ENCODE measurements at regions of chr9 and their contacts with region 1.

Region 1: DNA sequence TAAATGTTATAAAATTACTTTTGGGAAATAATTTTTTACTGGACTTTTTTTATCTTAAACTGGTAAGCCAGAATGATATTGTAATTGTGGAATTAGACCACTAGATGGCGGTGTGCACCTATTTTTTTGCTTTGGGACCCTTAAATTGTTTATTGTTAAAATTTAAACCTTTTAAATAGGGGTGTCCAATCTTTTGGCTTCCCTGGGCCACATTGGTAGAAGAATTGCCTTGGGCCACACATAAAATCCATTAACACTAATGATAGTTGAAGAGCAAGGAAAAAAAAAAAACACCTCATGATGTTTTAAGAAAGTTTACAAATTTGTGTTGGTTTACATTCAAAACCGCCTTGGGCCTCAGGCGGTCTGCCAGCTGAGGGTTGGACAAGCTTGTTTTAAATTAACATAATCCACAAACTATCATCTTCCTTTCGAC is 28.4 kb upstream of the GADD45G start:
- DNase-seq: no peak
- H3K4me3 ChIP-seq: no peak overlapping the region
- H3K27ac ChIP-seq: no peak overlapping the region
- H3K4me1 ChIP-seq: no peaks in the 10 kb centered on the region
- H3K27me3 ChIP-seq: no peaks in the 10 kb centered on the region
- CTCF ChIP-seq: peak; percentile 68 to 71 (median 69)
- POLR2A ChIP-seq: no peak

Region 2: GRCh38 chr9:88339317-88339716 is 1237.1 kb before region 1 on chr9:
- intact Hi-C with region 1: loop called (anchors 5 kb)
- DNase-seq: no peak
- H3K4me3 ChIP-seq: no peak overlapping the region
- H3K27ac ChIP-seq: no peak overlapping the region
- H3K4me1 ChIP-seq: no peaks in the 10 kb centered on the region
- H3K27me3 ChIP-seq: no peaks in the 10 kb centered on the region
- CTCF ChIP-seq: no peak
- POLR2A ChIP-seq: no peak

Region 3: GRCh38 chr9:89657765-89658164 is 81.3 kb after region 1 on chr9:
- intact Hi-C with region 1: no loop called
- DNase-seq: no peak
- H3K4me3 ChIP-seq: no peak overlapping the region
- H3K27ac ChIP-seq: no peak overlapping the region
- H3K4me1 ChIP-seq: peaks cover 78% of the 10 kb centered on the region
- H3K27me3 ChIP-seq: no peaks in the 10 kb centered on the region
- CTCF ChIP-seq: no peak
- POLR2A ChIP-seq: no peak

Region 4: DNA sequence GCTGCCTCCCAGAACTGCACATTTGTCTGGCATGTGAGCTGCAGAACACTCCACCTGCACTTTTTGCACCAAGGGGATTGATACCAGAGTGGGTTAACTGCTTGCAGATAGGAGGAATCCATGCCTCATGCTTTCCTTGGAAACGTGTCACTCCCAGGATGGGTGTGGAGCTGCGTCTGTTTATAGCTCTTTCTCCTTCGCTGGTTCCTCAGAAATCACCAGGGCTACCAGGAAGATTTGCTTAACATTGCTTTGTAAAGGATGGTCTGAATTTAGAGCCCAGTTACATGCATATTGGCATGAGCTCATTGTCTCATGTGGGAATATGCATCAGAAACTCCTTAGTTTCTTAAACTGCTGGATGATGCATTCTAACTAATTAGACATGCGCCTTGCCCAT is 263.0 kb after region 1 on chr9:
- intact Hi-C with region 1: no loop called
- DNase-seq: no peak
- H3K4me3 ChIP-seq: no peak overlapping the region
- H3K27ac ChIP-seq: no peak overlapping the region
- H3K4me1 ChIP-seq: no peaks in the 10 kb centered on the region
- H3K27me3 ChIP-seq: no peaks in the 10 kb centered on the region
- CTCF ChIP-seq: no peak
- POLR2A ChIP-seq: no peak

Region 5: GRCh38 chr9:90868555-90868954 is 1292.1 kb after region 1 on chr9:
- intact Hi-C with region 1: loop called (anchors 5 kb)
- DNase-seq: no peak
- H3K4me3 ChIP-seq: no peak overlapping the region
- H3K27ac ChIP-seq: no peak overlapping the region
- H3K4me1 ChIP-seq: no peaks in the 10 kb centered on the region
- H3K27me3 ChIP-seq: no peaks in the 10 kb centered on the region
- CTCF ChIP-seq: no peak
- POLR2A ChIP-seq: no peak